Prostate gland (tissue), 2 donors: ENCODE measurements at regions of chr12 and their contacts with region 1.

Region 1: DNA sequence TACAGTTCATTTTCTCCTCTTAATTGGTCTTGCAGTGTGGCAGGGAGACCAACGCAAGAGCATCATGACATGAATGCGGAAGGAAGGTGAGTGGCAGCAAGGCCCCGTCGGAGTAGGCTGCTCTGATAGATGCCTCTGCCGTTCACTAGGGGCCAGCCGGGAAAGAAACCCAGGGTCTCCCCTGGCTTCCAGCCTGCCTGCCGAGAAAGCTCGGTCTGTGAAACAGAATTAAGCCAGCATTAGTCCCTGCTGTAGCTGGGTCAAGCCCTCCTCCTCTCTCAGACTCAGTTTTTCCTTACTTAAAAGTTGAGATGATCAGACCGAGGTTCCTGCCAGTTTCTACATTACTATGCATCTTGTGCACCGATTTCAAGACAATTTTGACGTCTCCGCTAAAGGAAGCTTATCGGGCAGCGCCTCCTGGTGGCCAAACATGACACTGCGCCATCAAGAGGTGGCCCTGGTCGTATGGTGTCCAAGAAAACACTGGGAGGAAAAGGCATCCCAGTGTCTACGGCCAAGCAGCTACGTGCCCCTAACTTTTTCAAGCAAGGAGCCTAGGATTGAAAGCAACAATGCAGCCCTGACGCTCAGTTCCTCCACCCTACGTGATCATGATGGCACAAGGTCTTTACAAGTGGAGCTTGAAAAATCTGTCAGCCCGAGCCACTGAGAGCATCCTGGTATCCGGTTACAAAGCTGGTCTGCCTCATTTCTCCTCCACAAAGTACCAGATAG is 131.6 kb downstream of the KSR2 start:
- DNase-seq: peak; percentile 79
- H3K4me3 ChIP-seq: no peak overlapping the region
- H3K27ac ChIP-seq: no peak overlapping the region
- H3K4me1 ChIP-seq: no peaks in the 10 kb centered on the region
- H3K27me3 ChIP-seq: no peaks in the 10 kb centered on the region
- CTCF ChIP-seq: peak; percentile 93 to 98 (median 96)
- POLR2A ChIP-seq: no peak

Region 2: DNA sequence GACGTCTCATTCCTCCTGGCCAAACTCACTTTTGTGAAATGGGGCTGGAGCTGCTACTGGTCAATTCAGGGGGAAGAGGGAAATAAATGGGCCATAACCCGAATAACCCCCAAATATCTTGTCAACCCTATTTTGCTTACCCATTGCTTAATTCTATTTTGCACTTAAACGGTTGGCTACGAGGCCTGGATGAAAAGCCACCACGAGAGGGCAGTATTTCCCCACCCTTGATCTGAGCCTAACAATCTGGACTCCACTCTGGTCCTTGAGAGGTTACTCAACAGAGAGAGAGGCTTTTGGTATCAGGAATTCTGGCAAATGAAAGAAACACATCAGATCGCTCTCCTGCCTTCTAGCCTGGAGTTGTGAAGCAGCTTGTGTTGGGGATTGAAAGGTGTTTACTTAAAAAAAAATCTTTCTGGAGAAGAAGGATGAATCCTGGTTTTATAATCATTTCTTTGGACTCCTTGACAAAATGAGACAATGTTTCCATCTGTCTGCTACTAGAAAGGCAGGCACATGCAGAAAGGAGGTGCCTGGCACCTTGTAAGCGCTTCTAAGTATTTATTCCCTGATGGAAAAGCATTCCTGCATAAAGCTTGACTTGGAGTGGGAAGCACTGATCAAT is 624.5 kb before region 1 on chr12:
- intact Hi-C with region 1: loop called (anchors 2 kb)
- DNase-seq: peak; percentile 70
- H3K4me3 ChIP-seq: no peak overlapping the region
- H3K27ac ChIP-seq: no peak overlapping the region
- H3K4me1 ChIP-seq: no peaks in the 10 kb centered on the region
- H3K27me3 ChIP-seq: no peaks in the 10 kb centered on the region
- CTCF ChIP-seq: peak; percentile 75 to 85 (median 82)
- POLR2A ChIP-seq: no peak